CD8-positive, alpha-beta T cell (primary cell): ENCODE measurements at regions of chr17 and their contacts with region 1.

Region 1: GRCh38 chr17:1684378-1685189 is at the start of gene PRPF8:
- DNase-seq: peak; percentile 97 to 99 (median 98)
- ATAC-seq: peak; percentile 98
- H3K4me3 ChIP-seq: peak within 1 kb of the TSS; percentile 78 to 85
- H3K4me3 Mint-ChIP-seq: peak within 1 kb of the TSS; percentile 98
- H3K27ac ChIP-seq: peak within 1 kb of the TSS; percentile 92 to 95
- H3K27ac Mint-ChIP-seq: peak within 1 kb of the TSS; percentile 99
- H3K4me1 ChIP-seq: peaks cover 22% of the 10 kb centered on the region
- H3K4me1 Mint-ChIP-seq: peaks cover 53% of the 10 kb centered on the region
- H3K27me3 ChIP-seq: no peaks in the 10 kb centered on the region
- H3K27me3 Mint-ChIP-seq: no peaks in the 10 kb centered on the region
- CTCF ChIP-seq: no peak
- total RNA-seq, gene PRPF8: 572 to 611 TPM

Region 2: GRCh38 chr17:1455797-1456599 is 228.6 kb before region 1 on chr17 and contains the start of gene CRK:
- CTCF ChIA-PET with region 1: no interaction called
- POLR2A ChIA-PET with region 1: no interaction called
- intact Hi-C with region 1: loop called in 1 of 2 experiments (anchors 2 kb)
- DNase-seq: peak; percentile 95 to 100 (median 99)
- ATAC-seq: peak; percentile 95
- H3K4me3 ChIP-seq: peak within 1 kb of the TSS; percentile 80 to 94
- H3K4me3 Mint-ChIP-seq: peak within 1 kb of the TSS; percentile 92
- H3K27ac ChIP-seq: peak within 1 kb of the TSS; percentile 92 to 93
- H3K27ac Mint-ChIP-seq: peak within 1 kb of the TSS; percentile 91
- H3K4me1 ChIP-seq: peaks cover 43% of the 10 kb centered on the region
- H3K4me1 Mint-ChIP-seq: peaks cover 46% of the 10 kb centered on the region
- H3K27me3 ChIP-seq: peaks cover 0 to 10% of the 10 kb centered on the region in 2 experiments
- H3K27me3 Mint-ChIP-seq: peaks cover 10% of the 10 kb centered on the region
- CTCF ChIP-seq: no peak
- total RNA-seq, gene CRK: 15.4 to 15.9 TPM

Region 3: DNA sequence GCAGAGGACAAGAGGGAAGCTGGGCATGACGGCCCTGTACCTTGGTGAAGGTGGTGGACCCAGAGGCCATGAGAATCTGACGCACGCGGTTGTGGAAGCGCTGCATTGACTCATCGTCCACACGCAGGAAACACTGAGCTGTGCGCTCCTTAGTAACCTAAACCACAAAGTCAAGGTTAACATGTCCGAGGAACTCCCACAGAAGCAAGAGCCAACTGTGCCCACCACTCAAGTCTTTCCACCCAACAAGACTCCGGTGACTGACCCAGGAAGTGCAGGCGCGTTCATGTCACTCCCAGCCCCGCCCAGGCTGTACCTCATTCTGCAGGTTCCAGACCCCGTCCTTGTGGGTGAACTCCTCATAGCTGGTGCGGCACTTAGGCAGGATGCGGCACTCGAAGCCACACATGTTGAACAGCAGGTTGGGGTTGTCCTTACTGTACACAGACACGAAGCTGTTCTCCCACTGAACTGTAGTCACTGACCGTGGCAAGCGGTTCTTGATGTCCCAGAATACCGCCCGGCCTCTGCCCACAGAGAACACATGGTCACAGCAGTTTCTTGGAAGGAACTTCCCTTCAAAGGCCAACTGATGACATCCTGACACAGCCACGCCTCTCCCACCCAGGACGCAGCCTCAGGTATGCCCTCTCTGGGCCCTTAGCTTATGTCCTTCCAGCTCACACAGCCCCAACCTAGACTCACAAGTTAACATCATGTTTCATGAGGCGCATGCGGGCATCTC is 11.4 kb before region 1 on chr17:
- CTCF ChIA-PET with region 1: interaction called, 20 read pairs
- POLR2A ChIA-PET with region 1: interaction called, 4 read pairs
- intact Hi-C with region 1: loop called in 1 of 2 experiments (anchors 2 kb)
- DNase-seq: peak in 4 of 9 experiments; percentile 15 to 43 (median 38)
- ATAC-seq: peak; percentile 42
- H3K4me3 ChIP-seq: no peak overlapping the region
- H3K4me3 Mint-ChIP-seq: no peak overlapping the region
- H3K27ac ChIP-seq: no peak overlapping the region
- H3K27ac Mint-ChIP-seq: no peak overlapping the region
- H3K4me1 ChIP-seq: no peaks in the 10 kb centered on the region
- H3K4me1 Mint-ChIP-seq: peaks cover 29% of the 10 kb centered on the region
- H3K27me3 ChIP-seq: no peaks in the 10 kb centered on the region
- H3K27me3 Mint-ChIP-seq: no peaks in the 10 kb centered on the region
- CTCF ChIP-seq: no peak

Region 4: GRCh38 chr17:1752425-1753262 is 68.1 kb after region 1 on chr17:
- CTCF ChIA-PET with region 1: no interaction called
- POLR2A ChIA-PET with region 1: no interaction called
- intact Hi-C with region 1: no loop called
- DNase-seq: peak in 1 of 9 experiments; percentile 33
- ATAC-seq: no peak
- H3K4me3 ChIP-seq: no peak overlapping the region
- H3K4me3 Mint-ChIP-seq: no peak overlapping the region
- H3K27ac ChIP-seq: no peak overlapping the region
- H3K27ac Mint-ChIP-seq: no peak overlapping the region
- H3K4me1 ChIP-seq: peaks cover 10% of the 10 kb centered on the region
- H3K4me1 Mint-ChIP-seq: peaks cover 7% of the 10 kb centered on the region
- H3K27me3 ChIP-seq: no peaks in the 10 kb centered on the region
- H3K27me3 Mint-ChIP-seq: no peaks in the 10 kb centered on the region
- CTCF ChIP-seq: no peak

Region 5: GRCh38 chr17:1829592-1830257 is 145.1 kb after region 1 on chr17 and contains the starts of genes RPA1 and SMYD4:
- CTCF ChIA-PET with region 1: no interaction called
- POLR2A ChIA-PET with region 1: no interaction called
- intact Hi-C with region 1: loop called in 1 of 2 experiments (anchors 1 kb)
- DNase-seq: peak; percentile 74 to 95 (median 86)
- ATAC-seq: peak; percentile 96
- H3K4me3 ChIP-seq: peak within 1 kb of the TSS; percentile 81 to 82
- H3K4me3 Mint-ChIP-seq: peak within 1 kb of the TSS; percentile 94
- H3K27ac ChIP-seq: peak within 1 kb of the TSS; percentile 74 to 77
- H3K27ac Mint-ChIP-seq: peak within 1 kb of the TSS; percentile 92
- H3K4me1 ChIP-seq: peaks cover 24% of the 10 kb centered on the region
- H3K4me1 Mint-ChIP-seq: peaks cover 59% of the 10 kb centered on the region
- H3K27me3 ChIP-seq: no peaks in the 10 kb centered on the region
- H3K27me3 Mint-ChIP-seq: no peaks in the 10 kb centered on the region
- CTCF ChIP-seq: no peak
- total RNA-seq, gene RPA1: 35.1 to 38.1 TPM
- total RNA-seq, gene SMYD4: 8.9 to 10.1 TPM

Region 6: GRCh38 chr17:2041561-2042366 is 357.2 kb after region 1 on chr17 and contains the start of gene OVCA2:
- CTCF ChIA-PET with region 1: no interaction called
- POLR2A ChIA-PET with region 1: interaction called, 4 read pairs
- intact Hi-C with region 1: loop called in 1 of 2 experiments (anchors 10 kb)
- DNase-seq: peak; percentile 96 to 99 (median 97)
- ATAC-seq: peak; percentile 94
- H3K4me3 ChIP-seq: peak within 1 kb of the TSS; percentile 74 to 75
- H3K4me3 Mint-ChIP-seq: peak within 1 kb of the TSS; percentile 85
- H3K27ac ChIP-seq: peak within 1 kb of the TSS; percentile 77 to 89
- H3K27ac Mint-ChIP-seq: peak within 1 kb of the TSS; percentile 92
- H3K4me1 ChIP-seq: peaks cover 15% of the 10 kb centered on the region
- H3K4me1 Mint-ChIP-seq: peaks cover 20% of the 10 kb centered on the region
- H3K27me3 ChIP-seq: no peaks in the 10 kb centered on the region
- H3K27me3 Mint-ChIP-seq: no peaks in the 10 kb centered on the region
- CTCF ChIP-seq: peak; percentile 42
- total RNA-seq, gene OVCA2: 38.7 to 48.2 TPM